ENCODE measurements at regions of chr3 and their contacts with region 1.

Region 1: DNA sequence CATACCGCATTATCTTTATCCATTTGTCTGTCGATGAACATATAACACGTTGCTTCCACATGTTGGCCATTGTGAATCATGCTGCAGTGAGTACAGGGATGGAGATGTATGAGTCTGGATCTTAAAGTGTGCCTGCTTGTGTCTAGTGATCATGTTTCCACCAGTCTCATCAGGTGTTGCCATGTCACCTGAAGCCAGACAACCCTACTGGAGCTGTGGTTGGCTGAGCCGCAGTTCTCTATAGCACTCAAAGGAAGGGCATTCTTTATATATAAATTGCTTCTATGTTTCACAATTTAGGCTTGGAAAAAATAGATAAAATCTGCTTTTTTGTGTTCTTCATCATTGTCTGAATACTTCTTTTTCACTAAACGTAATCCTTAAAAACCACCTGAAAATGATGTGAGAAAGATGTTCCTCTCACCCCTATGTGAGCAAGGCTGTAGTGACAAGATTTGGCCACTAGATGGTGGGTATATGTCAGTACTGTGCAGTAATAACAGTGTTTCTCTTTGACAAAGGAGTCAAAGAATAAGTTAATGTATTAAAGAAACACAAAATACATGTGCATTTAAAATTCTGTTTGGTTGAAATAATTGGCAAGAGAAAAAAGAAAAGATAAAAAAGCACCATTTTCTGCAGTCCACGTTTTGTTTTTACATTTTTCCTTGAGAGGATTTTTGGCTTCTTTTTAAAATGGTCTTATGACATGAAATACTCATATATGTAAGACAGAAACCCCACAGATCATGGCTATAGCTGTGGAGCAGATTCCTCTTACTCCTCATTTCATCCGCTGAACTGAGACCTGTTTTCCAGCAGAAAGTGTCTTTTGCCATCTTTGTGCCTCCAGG is 394.5 kb upstream of the DPPA4 start:
- DNase-seq: peak; percentile 63
- H3K4me3 Mint-ChIP-seq: no peak overlapping the region
- H3K27ac Mint-ChIP-seq: no peak overlapping the region
- H3K4me1 Mint-ChIP-seq: peaks cover 36% of the 10 kb centered on the region
- H3K27me3 Mint-ChIP-seq: no peaks in the 10 kb centered on the region
- CTCF ChIP-seq: peak; percentile 58

Region 2: DNA sequence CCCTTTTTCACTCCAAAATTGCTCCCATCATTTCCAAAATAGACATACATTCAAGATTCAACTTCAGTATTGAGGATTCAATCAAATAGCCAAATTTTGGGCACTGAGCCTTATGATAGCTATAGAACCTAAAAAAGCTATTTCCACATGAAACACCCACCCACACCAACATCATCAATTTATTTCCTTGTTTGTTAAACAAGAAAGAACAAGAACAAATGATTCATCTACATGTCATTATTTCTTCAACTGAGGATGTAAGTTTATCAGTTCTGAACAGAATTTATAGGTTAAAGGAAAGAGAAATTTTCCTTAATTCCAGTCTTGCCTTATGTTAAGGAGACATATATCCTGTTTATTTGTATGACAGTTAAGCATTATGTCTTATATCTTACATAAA is 447.8 kb before region 1 on chr3:
- CTCF ChIA-PET with region 1: no interaction called
- intact Hi-C with region 1: no loop called
- DNase-seq: no peak
- H3K4me3 Mint-ChIP-seq: no peak overlapping the region
- H3K27ac Mint-ChIP-seq: no peak overlapping the region
- H3K4me1 Mint-ChIP-seq: no peaks in the 10 kb centered on the region
- H3K27me3 Mint-ChIP-seq: no peaks in the 10 kb centered on the region
- CTCF ChIP-seq: no peak

Region 3: DNA sequence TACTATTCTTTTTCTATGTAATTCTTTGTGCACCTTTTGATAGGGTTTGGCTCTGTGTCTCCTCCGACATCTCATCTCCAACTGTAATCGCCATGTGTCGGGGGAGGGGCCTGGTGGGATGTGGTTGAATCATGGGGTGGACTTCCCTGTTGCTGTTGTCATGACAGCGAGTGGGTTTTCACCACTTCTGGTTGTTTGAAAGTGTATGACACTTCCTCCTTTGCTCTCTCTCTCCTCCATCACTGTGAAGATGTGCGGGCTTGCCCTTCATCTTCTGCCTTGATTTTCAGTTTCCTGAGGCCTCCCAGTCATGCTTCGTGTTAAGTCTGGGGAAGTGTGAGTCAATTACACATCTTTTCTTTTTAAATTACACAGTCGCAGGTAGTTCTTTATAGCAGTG is 168.7 kb before region 1 on chr3:
- CTCF ChIA-PET with region 1: no interaction called
- intact Hi-C with region 1: loop called (anchors 5 kb)
- DNase-seq: no peak
- H3K4me3 Mint-ChIP-seq: no peak overlapping the region
- H3K27ac Mint-ChIP-seq: no peak overlapping the region
- H3K4me1 Mint-ChIP-seq: peaks cover 29% of the 10 kb centered on the region
- H3K27me3 Mint-ChIP-seq: no peaks in the 10 kb centered on the region
- CTCF ChIP-seq: no peak

Region 4: DNA sequence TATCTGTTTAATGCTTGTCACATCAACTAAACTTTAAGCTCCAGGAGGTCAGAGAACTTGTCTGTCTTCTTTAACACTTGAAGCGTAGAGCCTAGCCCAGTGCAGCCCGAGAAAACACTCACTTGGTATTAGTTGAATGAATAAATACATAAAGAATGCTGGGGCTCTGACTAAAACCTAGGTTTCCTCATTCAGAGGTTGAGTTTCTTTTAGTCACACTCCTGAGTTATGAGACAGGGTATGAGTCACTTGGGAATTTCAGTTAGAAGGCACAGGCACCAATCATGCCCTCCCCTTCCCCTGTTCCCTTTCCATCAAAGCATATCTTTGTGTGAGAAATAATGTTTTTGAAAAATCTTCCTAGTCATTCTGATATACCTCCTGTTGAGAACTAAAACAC is 195.3 kb after region 1 on chr3:
- CTCF ChIA-PET with region 1: no interaction called
- intact Hi-C with region 1: loop called (anchors 5 kb)
- DNase-seq: peak; percentile 58
- H3K4me3 Mint-ChIP-seq: no peak overlapping the region
- H3K27ac Mint-ChIP-seq: peak overlapping the region; percentile 97
- H3K4me1 Mint-ChIP-seq: peaks cover 80% of the 10 kb centered on the region
- H3K27me3 Mint-ChIP-seq: no peaks in the 10 kb centered on the region
- CTCF ChIP-seq: no peak

Region 5: DNA sequence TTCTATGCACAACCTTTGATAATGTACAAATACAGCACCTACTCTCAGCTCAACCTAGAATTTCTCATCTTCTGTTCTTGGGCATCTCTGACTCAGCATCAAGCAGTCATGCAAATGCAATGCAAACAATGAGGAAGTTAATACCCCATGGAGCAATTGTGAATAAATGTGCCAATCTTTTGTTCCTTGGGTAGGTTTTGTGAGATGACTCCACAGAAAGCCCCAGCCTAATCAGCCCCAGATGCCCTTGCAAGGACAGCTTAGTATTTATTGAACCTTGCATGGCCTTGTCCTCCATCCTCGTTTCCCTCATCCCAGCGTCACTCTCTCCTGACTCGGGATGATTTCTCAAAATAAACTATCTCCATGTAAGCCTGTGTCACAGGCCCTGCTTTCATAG is 845.1 kb after region 1 on chr3:
- CTCF ChIA-PET with region 1: no interaction called
- intact Hi-C with region 1: loop called (anchors 5 kb)
- DNase-seq: peak; percentile 51
- H3K4me3 Mint-ChIP-seq: no peak overlapping the region
- H3K27ac Mint-ChIP-seq: peak overlapping the region; percentile 87
- H3K4me1 Mint-ChIP-seq: peaks cover 43% of the 10 kb centered on the region
- H3K27me3 Mint-ChIP-seq: no peaks in the 10 kb centered on the region
- CTCF ChIP-seq: no peak

Region 6: GRCh38 chr3:111539351-111540331 is 1807.8 kb after region 1 on chr3:
- CTCF ChIA-PET with region 1: no interaction called
- intact Hi-C with region 1: loop called (anchors 5 kb)
- DNase-seq: peak; percentile 82
- H3K4me3 Mint-ChIP-seq: peak overlapping the region; percentile 39
- H3K27ac Mint-ChIP-seq: peak overlapping the region; percentile 11
- H3K4me1 Mint-ChIP-seq: peaks cover 32% of the 10 kb centered on the region
- H3K27me3 Mint-ChIP-seq: no peaks in the 10 kb centered on the region
- CTCF ChIP-seq: peak; percentile 74